Dendritic cell treated with granulocyte-macrophage colony-stimulating factor and Interleukin-4, amounts not matched to agents 40 ng/mL and 50 ng/mL, for 4 days (primary cell): ENCODE measurements at regions of chr6 and their contacts with region 1.

Region 1: DNA sequence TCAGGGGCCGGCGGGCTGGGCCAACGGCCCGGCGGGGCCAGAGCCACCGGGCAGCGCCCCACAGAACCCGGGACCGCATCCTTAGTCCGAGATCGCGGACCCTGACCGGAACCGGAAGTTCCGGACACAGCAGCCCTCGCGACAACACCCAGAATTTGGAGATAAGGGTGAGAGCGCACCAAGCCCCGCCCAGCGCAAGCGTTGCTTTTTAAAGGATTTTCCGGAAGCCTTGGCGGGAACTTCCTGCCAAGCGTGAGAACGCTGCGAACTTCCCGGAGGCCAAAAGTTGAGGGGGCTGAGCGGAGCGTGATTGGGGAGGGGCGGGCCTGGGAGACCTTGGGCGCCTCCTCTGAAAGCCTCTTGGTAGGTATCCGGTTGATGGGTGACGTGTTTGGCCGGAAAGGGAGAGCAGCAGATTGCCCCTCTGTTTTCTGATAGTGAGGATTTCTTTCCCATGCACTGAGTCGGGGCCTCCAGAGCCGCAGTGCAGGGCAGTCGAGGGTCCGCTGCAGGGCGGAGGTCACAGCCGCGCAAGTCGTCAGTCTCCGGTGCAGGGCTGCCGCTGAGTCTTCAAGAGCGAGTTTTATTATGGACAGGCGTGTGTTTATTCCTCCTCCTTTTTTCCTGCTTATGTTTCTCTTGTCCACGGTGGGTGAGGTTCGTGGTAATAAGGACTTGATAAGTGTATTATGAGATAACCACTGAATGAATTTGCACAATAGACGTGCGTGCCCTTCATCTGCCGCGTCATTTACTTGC is at the start of gene MTRF1L:
- H3K4me3 Mint-ChIP-seq: peak within 1 kb of the TSS; percentile 98
- H3K27ac Mint-ChIP-seq: peak within 1 kb of the TSS; percentile 93
- H3K4me1 Mint-ChIP-seq: peaks cover 33% of the 10 kb centered on the region
- H3K27me3 Mint-ChIP-seq: no peaks in the 10 kb centered on the region

Region 2: DNA sequence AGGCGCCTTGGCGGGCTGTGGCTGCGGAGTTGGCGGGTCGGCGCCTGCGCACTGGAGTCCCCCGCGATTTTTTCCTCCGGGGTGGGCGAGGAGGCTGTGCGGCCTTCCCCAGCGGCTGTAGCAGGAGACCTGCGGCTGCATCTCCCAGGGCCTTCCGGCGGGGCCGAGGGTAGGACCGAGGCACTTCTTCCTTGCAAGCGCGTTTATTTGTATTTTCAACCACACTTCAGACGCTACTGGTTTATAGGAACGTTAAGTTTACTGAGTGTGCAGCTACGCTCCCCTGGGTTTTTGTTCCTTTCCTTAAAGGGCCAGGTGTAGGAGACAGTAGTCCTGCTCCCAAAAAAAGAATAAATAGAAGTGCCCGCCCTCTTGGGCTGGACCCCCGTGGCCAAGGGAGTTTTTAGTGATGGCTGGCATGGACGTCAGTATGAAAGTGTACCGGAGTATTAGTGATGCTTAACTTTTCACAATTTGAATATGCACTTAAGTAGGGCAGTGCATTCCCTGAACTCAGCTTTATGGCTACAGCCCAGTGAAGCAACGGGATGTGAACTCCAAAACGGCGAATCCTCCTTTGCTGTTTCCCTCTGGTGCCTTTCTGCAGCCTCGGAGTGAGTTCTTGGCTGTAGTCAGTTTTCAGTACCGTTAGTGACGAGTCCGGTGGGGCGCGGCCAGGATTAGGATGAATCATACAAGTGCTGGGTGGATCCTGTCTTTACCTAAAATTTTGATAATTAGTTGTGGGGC is 19.0 kb before region 1 on chr6:
- intact Hi-C with region 1: loop called (anchors 2 kb)
- H3K4me3 Mint-ChIP-seq: peak overlapping the region; percentile 86
- H3K27ac Mint-ChIP-seq: peak overlapping the region; percentile 93
- H3K4me1 Mint-ChIP-seq: peaks cover 29% of the 10 kb centered on the region
- H3K27me3 Mint-ChIP-seq: no peaks in the 10 kb centered on the region